HCT116 (cell line): ENCODE measurements at regions of chr5 and their contacts with region 1.

Region 1: DNA sequence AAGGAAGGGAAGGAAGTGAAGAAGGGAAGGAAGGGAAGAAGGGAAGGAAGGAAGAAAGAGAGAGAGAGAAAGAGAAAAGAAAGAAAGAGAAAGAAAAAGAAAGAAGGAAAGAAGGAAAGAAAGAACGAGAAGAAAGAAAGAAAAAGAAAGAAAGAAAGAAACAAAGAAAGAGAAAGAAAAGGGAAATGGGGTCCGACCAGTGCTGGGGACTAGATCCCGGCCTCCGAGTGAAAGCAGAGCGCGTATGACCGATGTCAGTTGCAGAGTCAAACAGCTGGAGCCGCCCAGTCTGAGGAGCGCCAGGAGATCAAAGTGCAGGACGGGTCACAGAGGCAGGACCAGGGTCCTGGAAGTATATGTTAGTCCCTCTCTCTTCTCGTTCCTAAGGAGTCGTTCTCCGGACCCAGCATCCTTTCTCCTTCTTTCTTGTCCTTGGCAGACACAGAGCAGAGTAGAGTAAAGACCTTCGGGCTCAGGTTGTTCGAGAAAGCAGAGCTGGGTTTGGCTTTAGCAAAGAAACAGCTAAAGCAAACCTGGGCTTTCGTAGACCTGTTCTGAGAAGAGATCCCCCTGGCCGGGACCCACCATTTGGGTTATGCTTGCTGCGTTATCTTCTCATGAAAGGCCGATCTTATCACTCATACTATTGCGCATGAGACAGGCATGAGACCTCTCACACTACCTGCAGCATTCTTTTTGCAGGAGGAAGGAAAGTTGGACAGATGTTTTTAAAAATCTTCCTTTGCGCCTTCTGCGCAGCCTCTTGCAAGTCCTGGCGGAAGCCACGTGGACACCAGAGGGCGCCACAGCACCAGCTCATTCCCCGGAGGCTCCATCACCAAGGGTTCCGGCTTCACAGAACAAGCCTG is 305.2 kb upstream of the MSX2 start:
- DNase-seq: peak; percentile 89
- ATAC-seq: peak; percentile 96
- H3K4me3 ChIP-seq: peak overlapping the region; percentile 29 to 61
- H3K27ac ChIP-seq: no peak overlapping the region
- H3K4me1 ChIP-seq: peaks cover 5 to 10% of the 10 kb centered on the region in 2 experiments; a peak in 3 of 4 replicates
- H3K27me3 ChIP-seq: no peaks in the 10 kb centered on the region; the same call in 1 of the 2 replicates
- CTCF ChIP-seq: peak; percentile 91 to 97 (median 94)
- POLR2A ChIP-seq: no peak
- RAD21 ChIP-seq: peak; percentile 99

Region 2: DNA sequence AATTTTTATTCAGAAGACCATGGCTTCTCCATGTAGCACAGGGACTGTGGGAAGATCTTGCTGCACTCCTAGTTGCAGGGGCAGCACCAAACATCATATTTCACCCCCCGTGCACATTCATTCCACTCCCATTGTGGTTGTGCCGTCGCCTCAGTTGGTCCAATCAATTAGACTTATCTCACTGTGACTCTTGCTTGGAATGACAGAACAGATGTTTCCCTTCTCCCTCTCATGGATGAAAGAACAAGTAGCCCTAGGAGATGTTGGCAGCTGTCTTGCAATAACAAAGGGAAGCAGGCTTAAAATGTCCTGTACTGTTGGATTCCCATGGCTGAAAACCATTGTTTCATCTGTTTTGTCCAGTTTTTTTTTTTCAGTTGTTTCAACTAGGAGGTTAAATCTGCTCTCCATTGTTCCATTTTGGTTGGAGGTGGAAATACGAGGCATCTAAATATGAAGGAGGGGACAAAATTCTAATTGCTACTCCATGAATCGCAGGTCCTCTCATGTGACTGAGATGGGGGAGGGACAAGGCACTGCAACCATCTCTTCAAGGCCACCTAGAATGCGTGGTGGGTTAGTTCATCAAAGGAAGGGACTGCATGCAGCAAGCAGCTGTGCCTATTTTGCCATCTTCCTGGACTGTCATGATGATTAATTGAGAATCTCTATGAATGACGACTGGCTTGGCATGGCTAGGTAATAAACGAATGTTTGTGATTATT is 159.3 kb before region 1 on chr5:
- CTCF ChIA-PET with region 1: no interaction called
- POLR2A ChIA-PET with region 1: no interaction called
- RAD21 ChIA-PET with region 1: no interaction called
- intact Hi-C with region 1: no loop called
- DNase-seq: no peak
- ATAC-seq: no peak
- H3K4me3 ChIP-seq: no peak overlapping the region
- H3K27ac ChIP-seq: no peak overlapping the region
- H3K4me1 ChIP-seq: no peaks in the 10 kb centered on the region
- H3K27me3 ChIP-seq: peaks cover 11% of the 10 kb centered on the region
- CTCF ChIP-seq: no peak
- POLR2A ChIP-seq: no peak
- RAD21 ChIP-seq: no peak

Region 3: GRCh38 chr5:174409070-174409469 is 10.1 kb before region 1 on chr5:
- CTCF ChIA-PET with region 1: interaction called, 12 read pairs
- POLR2A ChIA-PET with region 1: no interaction called
- RAD21 ChIA-PET with region 1: no interaction called
- intact Hi-C with region 1: no loop called
- DNase-seq: no peak
- ATAC-seq: peak; percentile 65; the same call in 1 of the 2 replicates
- H3K4me3 ChIP-seq: no peak overlapping the region
- H3K27ac ChIP-seq: no peak overlapping the region
- H3K4me1 ChIP-seq: peaks cover 4 to 8% of the 10 kb centered on the region in 2 experiments; a peak in 3 of 4 replicates
- H3K27me3 ChIP-seq: peaks cover 9% of the 10 kb centered on the region; the same call in 1 of the 2 replicates
- CTCF ChIP-seq: peak; percentile 7 to 59 (median 58); a peak in 4 of 6 replicates
- POLR2A ChIP-seq: no peak
- RAD21 ChIP-seq: peak; percentile 38; the same call in 1 of the 2 replicates

Region 4: GRCh38 chr5:174453696-174454095 is 34.5 kb after region 1 on chr5:
- CTCF ChIA-PET with region 1: no interaction called
- POLR2A ChIA-PET with region 1: no interaction called
- RAD21 ChIA-PET with region 1: no interaction called
- intact Hi-C with region 1: no loop called
- DNase-seq: no peak
- ATAC-seq: no peak
- H3K4me3 ChIP-seq: no peak overlapping the region
- H3K27ac ChIP-seq: no peak overlapping the region
- H3K4me1 ChIP-seq: no peaks in the 10 kb centered on the region; a peak in 1 of 4 replicates
- H3K27me3 ChIP-seq: 0 out of 2 replicates have a peak, but pooled peaks cover 5% of the 10 kb centered on the region
- CTCF ChIP-seq: no peak
- POLR2A ChIP-seq: no peak
- RAD21 ChIP-seq: no peak

Region 5: DNA sequence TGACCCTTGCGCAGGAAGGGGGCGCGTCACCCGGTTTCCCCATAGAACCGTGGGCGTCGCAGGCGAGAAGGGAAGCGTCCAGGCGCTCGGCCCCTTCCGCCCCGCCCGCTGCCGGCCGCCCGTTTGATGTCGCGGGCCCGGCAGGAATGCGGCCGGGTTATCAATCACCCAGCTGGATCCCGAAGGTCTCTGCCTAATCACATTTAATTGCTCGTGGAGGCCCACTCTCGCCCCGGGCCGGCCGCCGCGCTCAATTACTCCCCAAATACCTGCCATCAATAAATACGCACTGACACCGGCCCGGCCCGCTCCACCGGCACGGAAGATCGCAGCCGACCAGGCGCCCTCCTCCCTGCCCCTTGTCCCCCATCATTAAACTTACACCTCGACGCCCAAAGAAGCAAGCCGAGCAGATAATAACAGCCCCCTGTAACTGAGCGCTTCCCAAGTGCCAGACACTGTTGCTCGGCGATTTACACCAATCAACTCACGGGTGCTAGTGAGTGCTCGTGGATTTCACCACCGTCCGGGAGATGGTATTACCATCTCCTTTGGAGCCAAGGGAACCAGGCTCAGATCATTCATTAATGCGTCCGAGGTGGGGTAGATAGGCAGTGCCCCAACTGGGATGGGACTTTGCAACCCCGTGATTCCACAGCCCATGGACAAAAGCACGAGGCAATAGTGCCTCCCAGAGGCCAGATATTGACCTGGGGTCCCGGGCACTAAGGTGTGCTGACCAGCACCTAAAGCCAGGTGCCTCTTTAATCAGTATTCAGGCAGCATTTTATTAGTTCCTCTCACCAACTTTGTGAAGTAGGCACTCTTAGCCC is 316.6 kb after region 1 on chr5:
- CTCF ChIA-PET with region 1: interaction called, 47 read pairs
- POLR2A ChIA-PET with region 1: interaction called, 4 read pairs
- RAD21 ChIA-PET with region 1: interaction called, 4 read pairs
- intact Hi-C with region 1: loop called (anchors 1 kb)
- DNase-seq: peak; percentile 45
- ATAC-seq: peak; percentile 92
- H3K4me3 ChIP-seq: peak overlapping the region; percentile 47 to 59
- H3K27ac ChIP-seq: no peak overlapping the region
- H3K4me1 ChIP-seq: peaks cover 10 to 16% of the 10 kb centered on the region in 2 experiments
- H3K27me3 ChIP-seq: no peaks in the 10 kb centered on the region; the same call in 1 of the 2 replicates
- CTCF ChIP-seq: peak; percentile 75 to 87 (median 85)
- POLR2A ChIP-seq: no peak
- RAD21 ChIP-seq: peak; percentile 98

Region 6: GRCh38 chr5:174751154-174752000 is 332.2 kb after region 1 on chr5:
- CTCF ChIA-PET with region 1: interaction called, 10 read pairs
- POLR2A ChIA-PET with region 1: no interaction called
- RAD21 ChIA-PET with region 1: no interaction called
- intact Hi-C with region 1: no loop called
- DNase-seq: no peak
- ATAC-seq: peak; percentile 83
- H3K4me3 ChIP-seq: peak overlapping the region; percentile 42 to 60
- H3K27ac ChIP-seq: peak overlapping the region; percentile 21; the same call in 1 of the 2 replicates
- H3K4me1 ChIP-seq: peaks cover 12 to 22% of the 10 kb centered on the region in 2 experiments
- H3K27me3 ChIP-seq: peaks cover 17% of the 10 kb centered on the region; the same call in 1 of the 2 replicates
- CTCF ChIP-seq: no peak
- POLR2A ChIP-seq: no peak
- RAD21 ChIP-seq: no peak

Region 7: GRCh38 chr5:174935854-174936474 is 516.8 kb after region 1 on chr5:
- CTCF ChIA-PET with region 1: no interaction called
- POLR2A ChIA-PET with region 1: no interaction called
- RAD21 ChIA-PET with region 1: no interaction called
- intact Hi-C with region 1: loop called (anchors 10 kb)
- DNase-seq: peak; percentile 51
- ATAC-seq: peak; percentile 98
- H3K4me3 ChIP-seq: no peak overlapping the region
- H3K27ac ChIP-seq: no peak overlapping the region
- H3K4me1 ChIP-seq: peaks cover 0 to 4% of the 10 kb centered on the region in 2 experiments; a peak in 1 of 4 replicates
- H3K27me3 ChIP-seq: no peaks in the 10 kb centered on the region
- CTCF ChIP-seq: peak; percentile 83 to 93 (median 92)
- POLR2A ChIP-seq: no peak
- RAD21 ChIP-seq: peak; percentile 93